ENCODE measurements at regions of chr12 and their contacts with region 1.

Region 1: DNA sequence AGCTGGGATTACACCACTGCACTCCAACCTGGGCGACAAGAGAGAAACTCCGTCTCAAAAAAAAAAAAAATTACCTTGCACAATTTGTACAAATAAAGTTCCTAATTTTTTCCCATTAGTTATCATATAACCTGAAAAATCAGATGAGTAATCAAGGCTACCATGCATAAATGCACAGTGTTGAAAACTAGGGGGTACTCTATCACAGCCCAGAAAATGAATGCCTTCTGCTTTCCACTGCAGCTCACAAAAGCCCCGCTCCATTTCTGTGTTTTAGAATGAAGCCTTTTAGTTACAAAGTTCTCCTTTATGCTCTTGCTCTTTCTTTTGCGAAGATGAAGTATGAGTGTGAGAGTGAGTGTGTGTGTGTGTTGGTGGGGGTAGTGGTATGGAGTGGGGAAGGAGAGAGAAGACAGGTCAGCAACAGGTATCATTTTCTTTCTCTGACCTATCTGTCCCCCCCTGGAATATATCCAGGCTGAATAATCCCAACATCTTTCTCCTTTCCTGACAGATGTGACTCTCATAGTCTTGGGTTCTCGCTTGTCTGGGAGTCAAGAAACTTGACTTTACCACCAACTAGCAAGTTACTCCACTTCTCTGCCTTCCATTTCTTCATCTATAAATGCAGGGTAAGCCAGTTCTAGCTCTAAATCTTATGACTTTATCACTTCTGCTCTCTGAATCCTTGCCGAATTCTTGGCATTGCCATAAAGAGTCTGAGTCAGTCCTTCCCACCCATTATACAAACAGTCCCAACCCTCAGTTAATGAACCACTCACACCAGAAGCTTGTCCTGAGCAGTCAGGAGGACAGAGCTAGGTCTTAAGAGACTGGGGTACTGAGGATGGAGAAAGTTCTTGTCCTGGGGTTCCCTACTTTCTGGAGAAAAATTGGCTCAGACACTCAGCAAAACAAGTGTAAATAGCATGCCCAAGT is 16.1 kb downstream of the BIN2 start:
- DNase-seq: peak; percentile 89 to 91
- ATAC-seq: peak; percentile 98 to 99
- H3K4me3 ChIP-seq: peak overlapping the region; percentile 5; the same call in 1 of the 3 replicates
- H3K27ac ChIP-seq: peak overlapping the region; percentile 73 to 86
- H3K4me1 ChIP-seq: peaks cover 23% of the 10 kb centered on the region
- CTCF ChIP-seq: no peak
- EP300 ChIP-seq: no peak
- POLR2A ChIP-seq: no peak
- RAD21 ChIP-seq: no peak

Region 2: DNA sequence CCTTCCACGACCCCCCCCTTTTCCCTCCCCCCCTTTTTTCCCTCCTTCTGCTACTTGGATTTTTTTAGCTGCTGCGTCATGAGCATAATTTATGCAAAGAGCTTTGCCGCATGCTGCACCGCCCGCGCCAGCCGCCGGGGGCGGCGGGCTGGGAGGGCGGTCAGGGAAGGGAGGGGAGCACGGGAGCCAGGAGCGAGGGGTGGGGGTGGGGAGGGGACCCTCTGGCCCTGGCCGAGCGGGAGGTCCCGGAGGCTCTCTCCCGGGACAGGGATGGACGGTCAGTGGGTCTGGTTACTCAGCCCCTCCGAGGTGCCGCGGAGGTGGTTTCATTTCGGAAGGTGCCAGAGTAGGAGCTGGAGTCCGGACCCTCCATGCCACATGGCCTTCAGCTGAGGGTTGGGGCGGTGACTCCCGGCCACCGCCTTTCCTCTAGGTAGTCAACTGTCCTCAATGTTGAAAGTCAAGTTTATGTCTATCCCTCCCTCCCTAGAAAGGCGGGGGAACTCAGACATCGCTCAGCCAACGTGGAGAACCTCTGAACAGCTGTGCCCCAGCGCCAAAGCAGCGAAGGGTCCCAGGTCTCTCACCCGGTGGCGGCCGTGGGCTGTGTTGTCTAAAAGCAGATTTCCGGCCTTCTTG is 89.8 kb before region 1 on chr12 and contains the start of gene POU6F1:
- CTCF ChIA-PET with region 1: no interaction called
- POLR2A ChIA-PET with region 1: interaction called, 11 read pairs
- DNase-seq: peak; percentile 77 to 94
- ATAC-seq: peak; percentile 88 to 94
- H3K4me3 ChIP-seq: peak within 1 kb of the TSS; percentile 82
- H3K27ac ChIP-seq: peak within 1 kb of the TSS; percentile 96 to 97
- H3K4me1 ChIP-seq: peaks cover 21% of the 10 kb centered on the region
- CTCF ChIP-seq: no peak
- EP300 ChIP-seq: no peak
- POLR2A ChIP-seq: peak; percentile 22; the same call in 1 of the 2 replicates
- RAD21 ChIP-seq: no peak
- polyA plus RNA-seq, gene POU6F1: 1.3 and 1.7 TPM in 2 replicates

Measured in A549 (cell line).